AG04449 (cell line): ENCODE measurements at regions of chr17 and their contacts with region 1.

Region 1: DNA sequence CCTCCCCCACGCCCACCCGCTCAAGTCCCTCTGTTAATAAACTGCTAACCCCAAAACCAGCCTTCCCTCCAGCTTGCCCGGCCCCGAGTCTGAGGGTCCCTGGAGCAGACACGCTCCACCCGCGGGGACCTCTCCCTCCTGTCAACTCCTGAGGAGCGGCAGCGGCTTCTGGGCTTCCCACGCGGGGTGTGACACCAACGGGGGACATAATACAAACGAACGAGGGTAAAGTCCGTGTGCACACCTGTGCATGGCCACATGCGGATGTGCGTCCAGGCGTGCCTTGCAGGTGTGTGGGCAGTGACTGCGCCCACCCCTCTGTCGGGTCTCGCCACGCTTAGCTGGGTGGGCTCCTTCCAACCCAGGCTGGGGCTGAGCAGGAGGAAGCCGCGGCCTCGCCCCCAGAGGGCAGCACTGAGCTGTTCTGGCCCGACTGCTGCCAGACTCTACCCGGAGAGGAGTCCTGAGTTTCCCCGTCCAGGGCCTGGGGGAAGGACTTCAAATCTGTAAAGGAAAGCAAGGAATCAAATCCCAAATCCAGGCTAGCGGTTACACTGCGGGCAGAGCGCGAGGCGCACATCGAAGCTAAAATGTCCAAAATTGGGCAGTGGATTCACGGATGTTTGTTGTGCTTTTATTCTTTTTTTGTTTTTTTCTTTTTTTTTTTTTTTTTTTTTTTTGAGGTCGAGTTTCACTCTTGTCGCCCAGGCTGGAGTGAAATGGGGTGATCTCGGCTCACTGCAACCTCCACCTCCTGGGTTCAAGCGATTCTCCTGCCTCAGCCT is 24.2 kb upstream of the KRT17 start:
- DNase-seq: no peak
- H3K4me3 ChIP-seq: peak overlapping the region; percentile 50
- CTCF ChIP-seq: peak; percentile 95

Region 2: DNA sequence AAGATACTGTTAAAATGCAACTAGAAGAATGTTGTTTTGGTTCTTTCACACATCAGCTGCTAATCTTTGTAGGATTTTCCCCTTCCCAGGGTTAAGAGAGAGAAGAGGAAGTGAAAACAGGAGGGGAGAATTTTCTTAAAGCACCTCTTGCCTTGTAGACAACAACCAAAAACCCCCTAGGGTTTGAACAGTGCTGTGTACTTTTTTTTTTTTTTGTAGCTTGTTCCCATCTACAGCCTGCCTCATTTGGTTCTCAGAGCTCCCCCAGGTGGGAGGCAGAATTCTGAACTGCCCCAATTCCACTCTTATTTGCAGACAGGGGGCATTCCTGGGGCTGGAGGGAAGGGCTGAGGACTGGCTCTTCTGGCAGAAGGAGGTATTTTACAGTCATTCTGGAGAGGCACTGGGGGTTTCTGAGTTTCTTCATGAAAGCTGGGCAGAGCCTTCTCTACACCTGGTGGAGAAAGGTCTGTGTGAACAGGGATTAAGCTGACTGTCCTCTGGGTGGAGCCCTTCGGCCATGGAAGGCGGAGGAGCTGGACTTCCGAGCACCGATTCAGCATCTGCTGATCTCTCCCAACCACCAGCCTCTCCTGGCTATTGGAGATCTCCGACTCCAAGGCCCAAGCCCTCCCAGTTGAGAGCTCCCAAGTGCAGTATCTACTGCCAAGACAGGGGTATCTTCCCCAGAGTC is 1033.2 kb before region 1 on chr17:
- CTCF ChIA-PET with region 1: interaction called, 10 read pairs
- POLR2A ChIA-PET with region 1: no interaction called
- DNase-seq: no peak
- H3K4me3 ChIP-seq: no peak overlapping the region
- CTCF ChIP-seq: peak; percentile 42

Region 3: GRCh38 chr17:40854159-40854814 is 794.3 kb before region 1 on chr17:
- CTCF ChIA-PET with region 1: interaction called, 172 read pairs
- POLR2A ChIA-PET with region 1: no interaction called
- DNase-seq: peak; percentile 80
- H3K4me3 ChIP-seq: no peak overlapping the region
- CTCF ChIP-seq: no peak

Region 4: GRCh38 chr17:41322094-41322902 is 326.3 kb before region 1 on chr17:
- CTCF ChIA-PET with region 1: interaction called, 18 read pairs
- POLR2A ChIA-PET with region 1: no interaction called
- DNase-seq: peak; percentile 24
- H3K4me3 ChIP-seq: no peak overlapping the region
- CTCF ChIP-seq: peak; percentile 72

Region 5: DNA sequence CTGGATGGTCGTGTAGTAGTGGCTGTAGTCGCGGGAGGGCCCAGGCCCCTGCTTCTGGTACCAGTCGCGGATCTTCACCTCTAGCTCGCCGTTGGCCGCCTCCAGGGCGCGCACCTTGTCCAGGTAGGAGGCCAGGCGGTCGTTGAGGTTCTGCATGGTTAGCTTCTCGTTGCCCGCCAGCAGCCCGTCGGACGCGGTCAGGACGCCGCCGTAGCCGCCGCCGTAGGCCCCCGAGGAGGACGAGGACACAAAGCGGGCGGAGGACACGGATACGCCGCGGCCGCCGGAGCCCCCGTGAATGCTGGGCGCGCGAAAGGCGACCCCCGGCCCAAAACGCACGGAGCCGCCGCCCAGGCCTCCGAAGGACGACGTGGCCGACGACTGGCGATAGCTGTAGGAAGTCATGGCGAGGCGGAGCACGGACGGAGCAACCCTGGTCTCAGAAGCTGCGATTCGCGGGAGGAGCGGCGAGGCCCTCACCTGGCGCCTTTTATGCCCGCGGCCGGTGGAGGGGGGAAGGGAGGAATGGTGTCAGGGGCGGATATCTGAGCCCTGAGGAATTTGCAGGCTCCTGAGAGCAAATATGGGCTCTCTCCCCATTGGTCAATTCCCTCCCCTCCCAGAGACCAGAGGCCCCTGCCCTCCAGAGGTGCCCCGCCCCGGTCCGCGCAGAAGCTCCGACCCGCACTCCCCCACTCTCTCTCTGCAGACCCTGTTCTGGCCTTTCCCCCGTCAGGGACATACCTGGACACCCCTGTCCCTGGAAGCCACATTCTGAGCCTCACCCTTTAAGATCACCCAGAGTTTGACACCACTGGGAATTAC is 120.5 kb before region 1 on chr17 and contains the start of gene KRT19:
- CTCF ChIA-PET with region 1: interaction called, 12 read pairs
- POLR2A ChIA-PET with region 1: no interaction called
- DNase-seq: no peak
- H3K4me3 ChIP-seq: peak within 1 kb of the TSS; percentile 69
- CTCF ChIP-seq: no peak

Region 6: GRCh38 chr17:41586863-41587495 is 61.6 kb before region 1 on chr17 and contains the start of gene KRT14:
- CTCF ChIA-PET with region 1: interaction called, 32 read pairs
- POLR2A ChIA-PET with region 1: no interaction called
- DNase-seq: no peak
- H3K4me3 ChIP-seq: no peak within 1 kb of the TSS
- CTCF ChIP-seq: no peak

Region 7: DNA sequence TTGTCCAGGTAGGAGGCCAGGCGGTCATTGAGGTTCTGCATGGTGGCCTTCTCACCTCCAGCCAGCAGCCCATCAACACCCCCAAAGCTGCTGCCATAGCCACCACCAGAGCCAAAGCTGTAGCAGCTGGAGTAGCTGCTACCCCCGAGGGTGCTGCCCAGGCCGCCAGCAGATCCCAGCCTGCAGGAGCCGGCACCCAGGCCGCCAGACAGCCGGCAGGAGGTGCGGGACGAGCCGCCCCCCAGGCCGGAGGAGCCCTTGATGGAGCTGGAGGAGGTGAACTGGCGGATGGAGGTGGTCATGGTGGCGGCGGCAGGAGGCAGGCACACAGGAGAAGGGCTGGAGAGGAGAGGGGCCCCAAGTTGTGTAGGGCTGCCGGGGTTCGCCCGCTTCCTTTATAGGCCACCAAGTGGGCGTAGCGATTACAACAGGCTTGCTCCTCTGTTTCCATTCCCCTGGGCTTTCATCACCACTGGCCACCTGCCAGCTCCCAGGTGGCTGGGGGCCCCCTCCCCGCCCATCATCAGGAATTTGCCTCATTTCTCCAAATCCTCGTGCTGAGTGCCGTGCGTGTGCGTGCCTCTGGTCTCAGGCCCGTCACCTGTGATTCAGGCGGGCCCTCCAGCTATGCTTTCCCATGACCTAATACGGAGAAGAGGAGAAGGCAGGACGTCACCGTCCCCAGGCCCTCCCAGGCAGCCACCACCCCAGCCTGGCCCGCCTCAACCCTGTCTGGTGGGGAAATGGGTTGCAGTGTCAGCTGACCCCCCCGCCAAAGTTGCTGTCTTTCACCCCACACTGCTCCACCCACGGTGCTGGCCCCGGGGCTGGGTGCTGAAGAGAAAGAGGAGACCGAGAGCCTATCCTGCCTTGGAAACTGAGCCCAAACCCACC is 24.1 kb before region 1 on chr17 and contains the start of gene KRT17:
- CTCF ChIA-PET with region 1: interaction called, 21 read pairs
- POLR2A ChIA-PET with region 1: no interaction called
- DNase-seq: no peak
- H3K4me3 ChIP-seq: no peak within 1 kb of the TSS
- CTCF ChIP-seq: no peak

Region 8: DNA sequence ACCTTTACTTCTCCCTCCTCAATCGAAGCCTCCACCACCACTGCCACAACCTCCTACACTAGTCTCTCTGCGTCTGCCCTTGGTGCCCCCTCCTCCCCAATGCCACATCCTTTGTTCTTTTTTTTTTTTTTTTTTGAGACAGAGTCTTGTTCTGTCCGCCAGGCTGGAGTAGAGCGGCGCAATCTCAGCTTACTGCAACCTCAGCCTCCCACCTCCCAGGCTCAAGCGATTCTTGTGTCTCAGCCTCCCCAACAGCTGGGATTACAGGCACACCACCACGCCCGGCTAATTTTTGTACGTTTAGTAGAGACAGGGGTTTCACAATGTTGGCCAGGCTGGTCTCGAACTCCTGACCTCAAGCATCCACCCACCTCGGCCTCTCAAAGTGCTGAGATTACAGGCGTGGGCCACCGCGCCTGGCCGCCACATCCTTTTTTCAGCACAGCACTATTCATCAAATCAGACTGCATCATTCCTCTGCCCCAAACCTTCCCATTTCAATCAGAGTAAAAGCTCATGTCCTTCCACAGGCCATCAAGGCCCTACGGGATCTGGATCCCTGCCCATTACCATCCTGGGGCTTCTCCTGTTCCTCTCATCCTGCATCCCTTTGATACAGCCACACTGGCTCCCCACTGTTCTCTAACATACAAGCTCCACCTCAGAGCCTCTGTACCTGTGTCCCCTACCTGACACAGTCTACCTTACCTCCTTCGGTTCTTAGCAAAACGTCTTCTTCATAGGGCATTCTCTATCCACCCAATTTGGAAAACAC is 214.7 kb after region 1 on chr17:
- CTCF ChIA-PET with region 1: no interaction called
- POLR2A ChIA-PET with region 1: no interaction called
- DNase-seq: no peak
- H3K4me3 ChIP-seq: peak overlapping the region; percentile 93
- CTCF ChIP-seq: no peak